CD8-positive, alpha-beta T cell (primary cell): ENCODE measurements at regions of chr5 and their contacts with region 1.

Region 1: GRCh38 chr5:131328536-131329285 is 64.9 kb downstream of the CDC42SE2 start:
- DNase-seq: peak in 1 of 9 experiments; percentile 36
- ATAC-seq: peak; percentile 30
- H3K4me3 ChIP-seq: no peak overlapping the region
- H3K4me3 Mint-ChIP-seq: peak overlapping the region; percentile 35
- H3K27ac ChIP-seq: peak overlapping the region in 1 of 2 experiments; percentile 13
- H3K27ac Mint-ChIP-seq: peak overlapping the region; percentile 82
- H3K4me1 ChIP-seq: peaks cover 67% of the 10 kb centered on the region
- H3K4me1 Mint-ChIP-seq: peaks cover 82% of the 10 kb centered on the region
- H3K27me3 ChIP-seq: no peaks in the 10 kb centered on the region
- H3K27me3 Mint-ChIP-seq: no peaks in the 10 kb centered on the region
- CTCF ChIP-seq: no peak

Region 2: GRCh38 chr5:131289738-131290137 is 39.0 kb before region 1 on chr5:
- CTCF ChIA-PET with region 1: no interaction called
- POLR2A ChIA-PET with region 1: no interaction called
- intact Hi-C with region 1: loop called in 1 of 2 experiments (anchors 5 kb)
- DNase-seq: peak in 2 of 9 experiments; percentile 34 to 57
- ATAC-seq: peak; percentile 52
- H3K4me3 ChIP-seq: peak overlapping the region; percentile 4 to 42
- H3K4me3 Mint-ChIP-seq: peak overlapping the region; percentile 76
- H3K27ac ChIP-seq: peak overlapping the region; percentile 21 to 79
- H3K27ac Mint-ChIP-seq: peak overlapping the region; percentile 91
- H3K4me1 ChIP-seq: peaks cover 87% of the 10 kb centered on the region
- H3K4me1 Mint-ChIP-seq: peaks cover 72% of the 10 kb centered on the region
- H3K27me3 ChIP-seq: no peaks in the 10 kb centered on the region
- H3K27me3 Mint-ChIP-seq: no peaks in the 10 kb centered on the region
- CTCF ChIP-seq: no peak

Region 3: GRCh38 chr5:131316026-131316425 is 12.7 kb before region 1 on chr5:
- CTCF ChIA-PET with region 1: no interaction called
- POLR2A ChIA-PET with region 1: interaction called, 4 read pairs
- intact Hi-C with region 1: loop called in 1 of 2 experiments (anchors 1 kb)
- DNase-seq: no peak
- ATAC-seq: no peak
- H3K4me3 ChIP-seq: no peak overlapping the region
- H3K4me3 Mint-ChIP-seq: no peak overlapping the region
- H3K27ac ChIP-seq: peak overlapping the region in 1 of 2 experiments; percentile 53
- H3K27ac Mint-ChIP-seq: peak overlapping the region; percentile 39
- H3K4me1 ChIP-seq: peaks cover 48% of the 10 kb centered on the region
- H3K4me1 Mint-ChIP-seq: peaks cover 78% of the 10 kb centered on the region
- H3K27me3 ChIP-seq: no peaks in the 10 kb centered on the region
- H3K27me3 Mint-ChIP-seq: no peaks in the 10 kb centered on the region
- CTCF ChIP-seq: no peak

Region 4: GRCh38 chr5:131357739-131358561 is 29.2 kb after region 1 on chr5:
- CTCF ChIA-PET with region 1: no interaction called
- POLR2A ChIA-PET with region 1: interaction called, 5 read pairs
- intact Hi-C with region 1: loop called in 1 of 2 experiments (anchors 5 kb)
- DNase-seq: peak in 2 of 9 experiments; percentile 46 to 65
- ATAC-seq: peak; percentile 46
- H3K4me3 ChIP-seq: no peak overlapping the region
- H3K4me3 Mint-ChIP-seq: peak overlapping the region; percentile 33
- H3K27ac ChIP-seq: peak overlapping the region; percentile 1 to 63
- H3K27ac Mint-ChIP-seq: peak overlapping the region; percentile 86
- H3K4me1 ChIP-seq: peaks cover 57% of the 10 kb centered on the region
- H3K4me1 Mint-ChIP-seq: peaks cover 75% of the 10 kb centered on the region
- H3K27me3 ChIP-seq: no peaks in the 10 kb centered on the region
- H3K27me3 Mint-ChIP-seq: no peaks in the 10 kb centered on the region
- CTCF ChIP-seq: no peak

Region 5: DNA sequence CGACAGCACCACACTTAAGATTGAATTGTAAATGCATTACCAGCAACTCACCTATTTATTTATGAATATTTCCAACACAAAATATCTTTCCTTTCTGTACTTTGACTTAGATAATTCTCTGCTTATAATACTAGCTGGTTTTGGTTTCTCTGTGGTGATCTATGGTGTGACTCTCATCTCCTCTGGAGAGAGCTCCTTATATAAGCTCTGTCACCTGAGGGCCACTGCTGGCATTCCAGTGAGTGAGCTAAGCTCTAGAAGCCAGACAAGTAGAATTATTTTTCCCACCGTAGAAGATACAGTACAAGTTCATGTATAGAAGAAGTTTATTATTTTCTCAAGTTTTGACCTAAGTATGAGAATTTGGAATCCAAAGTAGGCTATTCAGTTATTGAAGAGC is 46.6 kb after region 1 on chr5:
- CTCF ChIA-PET with region 1: interaction called, 3 read pairs
- POLR2A ChIA-PET with region 1: no interaction called
- intact Hi-C with region 1: loop called in 1 of 2 experiments (anchors 2 kb)
- DNase-seq: peak in 3 of 9 experiments; percentile 34 to 71 (median 51)
- ATAC-seq: no peak
- H3K4me3 ChIP-seq: no peak overlapping the region
- H3K4me3 Mint-ChIP-seq: peak overlapping the region; percentile 27
- H3K27ac ChIP-seq: peak overlapping the region; percentile 8 to 99
- H3K27ac Mint-ChIP-seq: peak overlapping the region; percentile 89
- H3K4me1 ChIP-seq: peaks cover 89% of the 10 kb centered on the region
- H3K4me1 Mint-ChIP-seq: peaks cover 89% of the 10 kb centered on the region
- H3K27me3 ChIP-seq: no peaks in the 10 kb centered on the region
- H3K27me3 Mint-ChIP-seq: no peaks in the 10 kb centered on the region
- CTCF ChIP-seq: no peak

Region 6: GRCh38 chr5:132363431-132364112 is 1034.9 kb after region 1 on chr5:
- CTCF ChIA-PET with region 1: no interaction called
- POLR2A ChIA-PET with region 1: no interaction called
- intact Hi-C with region 1: no loop called
- DNase-seq: no peak
- ATAC-seq: no peak
- H3K4me3 ChIP-seq: no peak overlapping the region
- H3K4me3 Mint-ChIP-seq: no peak overlapping the region
- H3K27ac ChIP-seq: no peak overlapping the region
- H3K27ac Mint-ChIP-seq: no peak overlapping the region
- H3K4me1 ChIP-seq: no peaks in the 10 kb centered on the region
- H3K4me1 Mint-ChIP-seq: peaks cover 1% of the 10 kb centered on the region
- H3K27me3 ChIP-seq: no peaks in the 10 kb centered on the region
- H3K27me3 Mint-ChIP-seq: no peaks in the 10 kb centered on the region
- CTCF ChIP-seq: no peak